ENCODE measurements at regions of chr18 and their contacts with region 1.

Region 1: GRCh38 chr18:60668583-60668982 is 296.0 kb upstream of the MC4R start:
- DNase-seq: no peak
- H3K4me3 ChIP-seq: no peak overlapping the region
- H3K27ac ChIP-seq: no peak overlapping the region
- H3K27me3 ChIP-seq: peaks cover 0 to 2% (median 0%) of the 10 kb centered on the region in 45 donors
- CTCF ChIP-seq: peak in 38 of 56 donors; percentile 13 to 49 (median 30)

Region 2: DNA sequence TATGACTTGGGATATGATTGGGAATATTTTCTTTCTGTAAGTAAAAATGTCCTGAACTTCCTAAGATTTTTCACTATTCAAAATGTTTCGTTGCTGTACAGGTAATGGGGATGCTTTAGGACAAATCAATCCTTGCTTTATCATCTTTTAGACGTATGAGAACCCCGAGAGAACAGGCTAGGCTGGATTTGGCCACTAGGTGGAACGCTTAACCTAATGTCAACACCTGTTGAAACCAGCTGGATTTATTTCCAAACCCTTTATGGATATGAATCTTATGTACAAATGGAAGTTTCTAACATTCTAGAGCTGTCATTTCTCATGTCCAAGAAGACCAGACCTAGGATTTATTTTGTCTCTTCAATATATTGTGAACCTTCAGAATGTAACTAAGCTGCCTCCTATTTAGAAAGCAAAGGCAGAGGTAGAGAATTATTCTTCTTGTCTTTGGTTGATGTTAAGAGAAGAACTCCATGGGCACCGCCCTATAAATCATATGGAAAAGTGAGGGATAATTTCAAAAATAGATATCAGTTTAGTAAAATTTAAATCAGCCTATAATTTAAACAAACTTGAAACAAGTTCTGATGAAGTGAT is 672.1 kb before region 1 on chr18:
- intact Hi-C with region 1: loop called in 1 of 2 experiments (anchors 10 kb)
- DNase-seq: peak in 2 of 10 donors; percentile 66 to 68
- H3K4me3 ChIP-seq: no peak overlapping the region
- H3K27ac ChIP-seq: no peak overlapping the region
- H3K27me3 ChIP-seq: peaks cover 0 to 3% (median 0%) of the 10 kb centered on the region in 45 donors
- CTCF ChIP-seq: peak; percentile 33 to 80 (median 60)